ENCODE measurements at regions of chr7 and their contacts with region 1.

Region 1: GRCh38 chr7:136853654-136854053 is 14.8 kb upstream of the CHRM2 start:
- DNase-seq: peak; percentile 53
- ATAC-seq: peak; percentile 63
- H3K4me3 ChIP-seq: no peak overlapping the region
- H3K27ac ChIP-seq: no peak overlapping the region
- H3K4me1 ChIP-seq: no peaks in the 10 kb centered on the region
- H3K27me3 ChIP-seq: peaks cover 5% of the 10 kb centered on the region
- CTCF ChIP-seq: no peak
- POLR2A ChIP-seq: no peak
- RAD21 ChIP-seq: no peak

Region 2: GRCh38 chr7:136405931-136406777 is 447.5 kb before region 1 on chr7:
- CTCF ChIA-PET with region 1: no interaction called
- POLR2A ChIA-PET with region 1: no interaction called
- dilution Hi-C with region 1: no loop called
- in situ Hi-C with region 1: no loop called
- intact Hi-C with region 1: loop called (anchors 5 kb)
- DNase-seq: peak; percentile 53
- ATAC-seq: peak; percentile 94
- H3K4me3 ChIP-seq: no peak overlapping the region
- H3K27ac ChIP-seq: no peak overlapping the region
- H3K4me1 ChIP-seq: no peaks in the 10 kb centered on the region
- H3K27me3 ChIP-seq: no peaks in the 10 kb centered on the region; the same call in 1 of the 2 replicates
- CTCF ChIP-seq: peak; percentile 68
- POLR2A ChIP-seq: no peak
- RAD21 ChIP-seq: peak; percentile 62

Region 3: GRCh38 chr7:136652635-136653370 is 200.9 kb before region 1 on chr7:
- CTCF ChIA-PET with region 1: no interaction called
- POLR2A ChIA-PET with region 1: no interaction called
- dilution Hi-C with region 1: no loop called
- in situ Hi-C with region 1: no loop called
- intact Hi-C with region 1: no loop called
- DNase-seq: peak; percentile 13
- ATAC-seq: peak; percentile 36; the same call in 1 of the 2 replicates
- H3K4me3 ChIP-seq: no peak overlapping the region
- H3K27ac ChIP-seq: no peak overlapping the region
- H3K4me1 ChIP-seq: no peaks in the 10 kb centered on the region
- H3K27me3 ChIP-seq: no peaks in the 10 kb centered on the region
- CTCF ChIP-seq: no peak
- POLR2A ChIP-seq: no peak
- RAD21 ChIP-seq: no peak